Breast epithelium (tissue), 4 donors: ENCODE measurements at regions of chr4 and their contacts with region 1.

Region 1: GRCh38 chr4:144360146-144360793 is 219.8 kb upstream of the GYPA start:
- DNase-seq: no peak
- H3K4me3 ChIP-seq: no peak overlapping the region
- H3K27ac ChIP-seq: no peak overlapping the region
- H3K4me1 ChIP-seq: no peaks in the 10 kb centered on the region
- H3K27me3 ChIP-seq: no peaks in the 10 kb centered on the region
- CTCF ChIP-seq: no peak
- POLR2A ChIP-seq: no peak

Region 2: GRCh38 chr4:144376866-144377265 is 16.6 kb after region 1 on chr4:
- intact Hi-C with region 1: loop called (anchors 1 kb)
- DNase-seq: no peak
- H3K4me3 ChIP-seq: no peak overlapping the region
- H3K27ac ChIP-seq: no peak overlapping the region
- H3K4me1 ChIP-seq: no peaks in the 10 kb centered on the region
- H3K27me3 ChIP-seq: no peaks in the 10 kb centered on the region
- CTCF ChIP-seq: no peak
- POLR2A ChIP-seq: no peak